OCI-LY7 (cell line): ENCODE measurements at regions of chr11 and their contacts with region 1.

Region 1: GRCh38 chr11:118870396-118871345 is 13.0 kb upstream of the CXCR5 start:
- DNase-seq: peak; percentile 90
- H3K4me3 ChIP-seq: peak overlapping the region; percentile 68
- H3K27ac ChIP-seq: peak overlapping the region; percentile 95
- H3K4me1 ChIP-seq: peaks cover 71% of the 10 kb centered on the region
- CTCF ChIP-seq: peak; percentile 38; the same call in 1 of the 2 replicates

Region 2: DNA sequence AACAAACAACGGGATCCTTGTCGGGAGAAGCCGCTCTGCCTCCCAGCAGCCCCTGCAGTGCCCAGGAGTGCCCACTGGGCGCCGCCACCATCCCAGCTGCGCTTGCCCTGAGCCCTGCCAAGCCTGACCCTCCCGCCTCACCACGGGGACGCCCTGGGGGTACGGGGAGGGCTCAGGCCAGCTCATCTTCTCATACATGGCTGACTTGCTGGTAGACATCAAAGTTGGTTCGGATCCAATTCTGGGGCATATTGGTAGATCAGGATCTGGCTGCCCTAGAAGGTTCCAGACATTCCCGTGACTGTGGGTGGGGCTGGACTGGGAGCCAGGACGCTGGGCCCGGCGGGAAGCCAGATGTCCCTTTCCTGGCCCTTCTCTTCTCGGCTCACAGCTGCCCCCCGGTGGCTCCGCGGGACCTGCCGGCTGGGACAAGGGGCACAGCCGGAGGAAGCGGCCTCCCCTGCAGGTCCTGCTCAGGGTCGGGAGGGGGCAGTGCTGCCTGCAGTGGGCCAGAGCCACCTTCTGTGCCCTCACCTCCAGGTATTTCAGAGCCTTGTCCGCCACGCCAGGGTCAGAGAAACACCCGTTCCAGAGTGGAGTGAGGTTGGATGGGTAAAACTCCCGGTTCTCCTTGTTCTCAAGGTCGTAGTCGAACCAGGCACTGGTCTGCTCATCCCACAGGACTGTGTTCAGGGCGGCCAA is 180.7 kb before region 1 on chr11:
- CTCF ChIA-PET with region 1: no interaction called
- POLR2A ChIA-PET with region 1: interaction called, 4 read pairs
- intact Hi-C with region 1: loop called (anchors 1 kb)
- DNase-seq: peak; percentile 91
- H3K4me3 ChIP-seq: peak overlapping the region; percentile 46
- H3K27ac ChIP-seq: no peak overlapping the region
- H3K4me1 ChIP-seq: peaks cover 7% of the 10 kb centered on the region
- CTCF ChIP-seq: peak; percentile 98

Region 3: DNA sequence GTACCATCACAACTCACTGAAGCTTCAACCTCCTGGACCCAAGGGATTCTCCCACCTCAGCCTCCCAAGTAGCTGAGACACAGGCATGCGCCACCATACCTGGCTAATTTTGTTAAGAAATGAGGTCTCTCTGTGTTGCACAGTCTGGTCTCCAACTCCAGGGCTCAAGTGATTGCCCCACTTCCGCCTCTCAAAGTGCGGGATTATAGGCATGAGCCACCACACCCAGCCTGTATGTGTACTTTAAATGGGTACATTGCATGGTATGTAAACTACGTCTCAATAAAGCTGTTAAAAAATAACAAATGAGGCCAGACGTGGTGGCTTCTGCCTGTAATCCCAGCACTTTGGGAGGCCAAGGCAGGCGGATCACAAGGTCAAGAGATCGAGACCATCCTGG is 43.6 kb before region 1 on chr11:
- CTCF ChIA-PET with region 1: no interaction called
- POLR2A ChIA-PET with region 1: interaction called, 11 read pairs
- intact Hi-C with region 1: no loop called
- DNase-seq: no peak
- H3K4me3 ChIP-seq: no peak overlapping the region
- H3K27ac ChIP-seq: no peak overlapping the region
- H3K4me1 ChIP-seq: peaks cover 26% of the 10 kb centered on the region
- CTCF ChIP-seq: no peak

Region 4: GRCh38 chr11:118851970-118852369 is 18.7 kb before region 1 on chr11:
- CTCF ChIA-PET with region 1: interaction called, 3 read pairs
- POLR2A ChIA-PET with region 1: interaction called, 46 read pairs
- intact Hi-C with region 1: loop called (anchors 1 kb)
- DNase-seq: peak; percentile 86
- H3K4me3 ChIP-seq: peak overlapping the region; percentile 33
- H3K27ac ChIP-seq: peak overlapping the region; percentile 84
- H3K4me1 ChIP-seq: peaks cover 56% of the 10 kb centered on the region
- CTCF ChIP-seq: no peak

Region 5: DNA sequence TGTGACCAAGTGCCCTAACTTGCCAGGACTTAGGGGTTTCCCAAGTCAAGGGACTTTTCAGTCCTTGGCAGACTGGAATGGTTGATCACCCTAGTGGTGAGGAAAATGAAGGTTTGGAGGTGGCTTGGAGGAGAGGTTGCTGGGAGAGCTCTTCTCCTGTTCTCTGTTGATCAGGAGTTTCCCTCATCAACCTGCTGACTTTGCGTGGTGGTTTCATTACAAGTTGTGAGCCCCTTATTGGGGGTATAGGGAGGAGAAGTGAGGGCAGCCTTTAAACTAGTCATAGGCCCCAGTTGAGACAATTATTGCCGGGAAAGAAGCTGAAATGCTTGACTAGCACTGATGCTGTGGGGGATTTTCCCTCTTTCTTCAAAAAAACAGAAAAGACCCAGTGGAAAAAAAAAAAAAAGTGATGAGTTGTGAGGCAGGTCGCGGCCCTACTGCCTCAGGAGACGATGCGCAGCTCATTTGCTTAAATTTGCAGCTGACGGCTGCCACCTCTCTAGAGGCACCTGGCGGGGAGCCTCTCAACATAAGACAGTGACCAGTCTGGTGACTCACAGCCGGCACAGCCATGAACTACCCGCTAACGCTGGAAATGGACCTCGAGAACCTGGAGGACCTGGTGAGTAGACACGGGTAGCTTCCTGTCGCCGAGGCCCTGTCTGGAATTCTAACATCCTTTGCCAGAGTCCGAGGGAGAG is 12.8 kb after region 1 on chr11 and contains the start of gene CXCR5:
- CTCF ChIA-PET with region 1: interaction called, 3 read pairs
- POLR2A ChIA-PET with region 1: interaction called, 42 read pairs
- intact Hi-C with region 1: no loop called
- DNase-seq: peak; percentile 89
- H3K4me3 ChIP-seq: peak within 1 kb of the TSS; percentile 61
- H3K27ac ChIP-seq: peak within 1 kb of the TSS; percentile 32
- H3K4me1 ChIP-seq: peaks cover 74% of the 10 kb centered on the region
- CTCF ChIP-seq: peak; percentile 40; the same call in 1 of the 2 replicates
- total RNA-seq, gene CXCR5: 1.4 and 3.3 TPM in 2 replicates

Region 6: GRCh38 chr11:118928108-118928870 is 57.6 kb after region 1 on chr11:
- CTCF ChIA-PET with region 1: no interaction called
- POLR2A ChIA-PET with region 1: no interaction called
- intact Hi-C with region 1: loop called (anchors 2 kb)
- DNase-seq: peak; percentile 91
- H3K4me3 ChIP-seq: peak overlapping the region; percentile 71
- H3K27ac ChIP-seq: peak overlapping the region; percentile 76
- H3K4me1 ChIP-seq: peaks cover 44% of the 10 kb centered on the region
- CTCF ChIP-seq: peak; percentile 96

Region 7: GRCh38 chr11:119041821-119042514 is 171.3 kb after region 1 on chr11:
- CTCF ChIA-PET with region 1: no interaction called
- POLR2A ChIA-PET with region 1: no interaction called
- intact Hi-C with region 1: no loop called
- DNase-seq: no peak
- H3K4me3 ChIP-seq: no peak overlapping the region
- H3K27ac ChIP-seq: no peak overlapping the region
- H3K4me1 ChIP-seq: no peaks in the 10 kb centered on the region
- CTCF ChIP-seq: no peak

Region 8: DNA sequence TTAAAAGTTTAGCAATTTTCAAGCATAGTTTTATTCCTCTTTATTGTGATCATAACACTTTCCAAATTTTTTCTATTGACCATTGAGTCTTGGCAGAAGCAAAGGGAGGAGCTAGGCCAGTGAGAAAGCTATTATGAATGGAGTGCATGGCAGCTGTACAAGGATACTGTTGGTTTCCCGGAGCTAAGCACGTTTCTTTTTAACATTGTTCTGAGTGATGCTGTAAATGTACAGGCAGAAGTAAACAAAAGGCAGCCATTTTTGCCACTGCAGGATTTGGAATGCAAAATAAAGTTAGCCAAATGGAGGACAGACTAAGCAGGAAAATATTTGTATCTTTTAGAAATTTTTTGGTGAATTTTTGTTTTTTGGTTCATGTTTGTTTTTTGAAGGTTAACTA is 351.6 kb after region 1 on chr11:
- CTCF ChIA-PET with region 1: no interaction called
- POLR2A ChIA-PET with region 1: no interaction called
- intact Hi-C with region 1: no loop called
- DNase-seq: no peak
- H3K4me3 ChIP-seq: no peak overlapping the region
- H3K27ac ChIP-seq: no peak overlapping the region
- H3K4me1 ChIP-seq: peaks cover 7% of the 10 kb centered on the region
- CTCF ChIP-seq: no peak